ENCODE measurements at regions of chr19 and their contacts with region 1.

Region 1: GRCh38 chr19:47735131-47735530 is 10.2 kb upstream of the NOP53 start:
- DNase-seq: no peak
- H3K4me3 ChIP-seq: no peak overlapping the region
- H3K27ac ChIP-seq: no peak overlapping the region
- H3K4me1 ChIP-seq: no peaks in the 10 kb centered on the region
- H3K27me3 ChIP-seq: no peaks in the 10 kb centered on the region
- CTCF ChIP-seq: no peak
- EP300 ChIP-seq: no peak
- RAD21 ChIP-seq: no peak

Region 2: DNA sequence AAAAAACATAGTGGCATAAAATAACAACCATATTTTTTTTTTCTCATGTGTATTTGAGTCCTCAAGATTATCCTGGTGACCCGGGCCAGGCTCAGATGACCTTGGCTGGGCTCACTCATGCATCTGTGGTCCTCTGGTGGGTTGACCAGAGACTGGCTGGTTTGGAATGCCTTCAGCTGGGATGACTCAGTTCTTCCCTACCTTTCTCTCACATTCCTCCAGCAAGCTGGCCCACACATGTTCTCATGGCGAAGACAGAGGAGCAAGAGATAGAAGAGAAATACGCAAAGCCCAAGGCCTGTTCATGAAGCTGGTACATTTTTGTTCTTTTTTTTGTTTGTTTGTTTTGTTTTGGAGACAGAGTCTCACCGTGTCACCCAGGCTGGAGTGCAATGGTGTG is 147.8 kb before region 1 on chr19:
- CTCF ChIA-PET with region 1: no interaction called
- POLR2A ChIA-PET with region 1: no interaction called
- DNase-seq: no peak
- H3K4me3 ChIP-seq: no peak overlapping the region
- H3K27ac ChIP-seq: no peak overlapping the region
- H3K4me1 ChIP-seq: no peaks in the 10 kb centered on the region
- H3K27me3 ChIP-seq: no peaks in the 10 kb centered on the region
- CTCF ChIP-seq: no peak
- EP300 ChIP-seq: no peak
- RAD21 ChIP-seq: no peak

Region 3: DNA sequence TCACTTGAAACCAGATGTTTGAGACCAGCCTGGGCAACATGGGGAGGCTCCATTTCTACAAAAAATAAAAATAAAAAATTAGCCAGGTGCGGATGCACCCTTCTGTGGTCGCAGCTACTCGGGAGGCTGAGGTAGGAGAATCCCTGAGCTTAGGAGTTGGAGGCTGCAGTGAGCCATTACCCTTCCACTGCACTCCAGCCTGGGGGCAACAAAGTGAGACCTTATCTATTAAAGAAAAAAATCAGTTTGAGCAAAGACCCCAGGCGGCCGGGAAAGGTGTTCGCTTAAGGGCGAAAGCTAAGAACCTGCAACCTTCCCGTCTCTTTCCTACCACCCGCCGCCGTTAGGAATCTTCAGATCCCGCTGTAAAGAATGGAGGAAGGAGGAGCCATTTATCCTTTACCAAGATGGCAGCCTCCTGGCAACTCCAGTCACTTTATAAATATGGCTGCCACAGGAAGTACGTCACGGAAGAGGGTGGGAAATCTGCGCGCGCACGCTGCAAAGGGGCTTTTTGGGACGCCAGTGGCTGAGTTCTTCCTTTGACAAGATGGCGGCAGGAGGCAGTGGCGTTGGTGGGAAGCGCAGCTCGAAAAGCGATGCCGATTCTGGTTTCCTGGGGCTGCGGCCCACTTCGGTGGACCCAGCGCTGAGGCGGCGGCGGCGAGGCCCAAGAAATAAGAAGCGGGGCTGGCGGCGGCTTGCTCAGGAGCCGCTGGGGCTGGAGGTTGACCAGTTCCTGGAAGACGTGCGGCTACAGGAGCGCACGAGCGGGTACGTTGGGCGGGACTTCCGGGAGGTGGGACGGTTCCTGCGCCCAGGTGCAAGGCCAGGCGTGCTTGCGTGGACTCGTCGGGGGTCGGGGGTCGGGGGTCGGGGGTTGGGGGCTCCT is 10.1 kb after region 1 on chr19 and contains the start of gene NOP53:
- CTCF ChIA-PET with region 1: interaction called, 10 read pairs
- POLR2A ChIA-PET with region 1: interaction called, 3 read pairs
- DNase-seq: peak; percentile 96
- H3K4me3 ChIP-seq: peak within 1 kb of the TSS; percentile 65 to 83
- H3K27ac ChIP-seq: peak within 1 kb of the TSS; percentile 91 to 97
- H3K4me1 ChIP-seq: peaks cover 12 to 14% of the 10 kb centered on the region in 2 experiments; a peak in 1 of 4 replicates
- H3K27me3 ChIP-seq: no peaks in the 10 kb centered on the region
- CTCF ChIP-seq: no peak
- EP300 ChIP-seq: peak in 1 of 2 experiments; percentile 39; a peak in 1 of 4 replicates
- RAD21 ChIP-seq: no peak
- polyA plus RNA-seq, gene NOP53: 198 and 275 TPM in 2 replicates

Region 4: DNA sequence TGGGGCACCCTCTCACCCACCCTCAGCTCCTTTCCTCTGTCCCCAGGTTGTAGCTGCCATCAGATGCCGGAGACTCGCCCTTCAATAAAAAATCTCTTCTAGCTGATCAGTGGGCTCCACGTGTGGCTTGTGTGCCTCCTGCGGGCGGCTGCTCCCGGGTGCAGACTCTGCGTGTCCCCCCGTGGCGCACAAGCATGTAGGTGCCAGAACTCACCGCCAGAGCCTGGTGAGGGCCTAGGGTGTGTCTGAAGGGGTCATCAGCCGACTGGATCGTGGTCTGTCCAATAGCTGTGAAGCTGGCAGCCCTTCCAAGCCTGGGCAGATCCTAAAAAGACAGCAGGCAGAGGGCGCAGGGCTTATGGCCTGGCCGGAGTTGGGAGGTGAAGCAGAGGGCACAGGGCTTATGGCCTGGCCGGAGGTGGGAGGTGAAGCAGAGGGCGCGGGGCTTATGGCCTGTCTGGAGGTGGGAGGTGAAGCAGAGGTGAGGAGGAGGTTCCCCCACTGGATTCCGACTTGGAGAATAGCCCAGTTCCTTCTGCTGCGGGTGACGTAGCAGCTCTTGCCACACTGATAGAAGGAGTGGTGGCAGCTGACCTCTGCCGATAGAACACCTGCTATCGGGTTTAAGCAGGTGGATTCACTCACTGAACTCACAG is 21.9 kb after region 1 on chr19:
- CTCF ChIA-PET with region 1: no interaction called
- POLR2A ChIA-PET with region 1: no interaction called
- DNase-seq: no peak
- H3K4me3 ChIP-seq: no peak overlapping the region
- H3K27ac ChIP-seq: no peak overlapping the region
- H3K4me1 ChIP-seq: no peaks in the 10 kb centered on the region
- H3K27me3 ChIP-seq: no peaks in the 10 kb centered on the region
- CTCF ChIP-seq: no peak
- EP300 ChIP-seq: no peak
- RAD21 ChIP-seq: no peak